Right ventricle myocardium inferior (tissue), 1 donor: ENCODE measurements at regions of chr11 and their contacts with region 1.

Region 1: DNA sequence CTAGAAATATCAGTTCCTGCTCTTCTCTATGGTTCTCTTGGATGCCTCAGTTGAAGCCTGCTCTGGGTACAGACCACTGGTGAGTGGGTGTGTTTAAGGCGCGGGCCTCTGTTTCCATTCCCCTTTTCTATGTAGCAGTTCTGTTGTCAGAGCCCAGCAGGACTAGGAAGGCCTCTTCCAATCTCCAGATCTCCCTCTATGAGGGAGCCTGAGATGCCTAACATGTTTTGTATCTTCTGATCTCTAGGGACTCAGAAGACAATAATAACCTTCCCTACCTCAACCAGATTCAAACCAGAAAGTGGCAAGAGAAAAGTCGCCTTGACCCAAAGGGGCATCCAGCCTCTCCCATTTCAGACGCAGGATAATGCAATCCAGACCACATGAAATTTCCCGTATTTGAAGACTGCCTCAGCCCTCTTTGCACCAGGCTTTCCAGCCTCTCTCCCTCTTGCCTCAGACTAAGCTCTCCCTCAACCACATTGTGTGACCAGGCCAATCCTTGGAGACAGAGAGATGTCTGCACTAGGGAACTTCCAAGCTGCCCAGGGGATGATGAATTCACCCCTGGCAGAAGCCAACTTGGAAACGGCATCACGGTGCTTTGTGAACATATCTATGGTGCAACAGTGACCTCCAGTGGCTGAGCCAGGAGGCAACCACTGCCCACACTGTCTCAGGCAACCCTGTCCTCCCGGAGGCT is 150.1 kb upstream of the UBASH3B start:
- DNase-seq: peak; percentile 78
- ATAC-seq: peak; percentile 97

Region 2: GRCh38 chr11:122020902-122021301 is 484.6 kb before region 1 on chr11:
- intact Hi-C with region 1: loop called (anchors 10 kb)
- DNase-seq: no peak
- ATAC-seq: no peak

Region 3: DNA sequence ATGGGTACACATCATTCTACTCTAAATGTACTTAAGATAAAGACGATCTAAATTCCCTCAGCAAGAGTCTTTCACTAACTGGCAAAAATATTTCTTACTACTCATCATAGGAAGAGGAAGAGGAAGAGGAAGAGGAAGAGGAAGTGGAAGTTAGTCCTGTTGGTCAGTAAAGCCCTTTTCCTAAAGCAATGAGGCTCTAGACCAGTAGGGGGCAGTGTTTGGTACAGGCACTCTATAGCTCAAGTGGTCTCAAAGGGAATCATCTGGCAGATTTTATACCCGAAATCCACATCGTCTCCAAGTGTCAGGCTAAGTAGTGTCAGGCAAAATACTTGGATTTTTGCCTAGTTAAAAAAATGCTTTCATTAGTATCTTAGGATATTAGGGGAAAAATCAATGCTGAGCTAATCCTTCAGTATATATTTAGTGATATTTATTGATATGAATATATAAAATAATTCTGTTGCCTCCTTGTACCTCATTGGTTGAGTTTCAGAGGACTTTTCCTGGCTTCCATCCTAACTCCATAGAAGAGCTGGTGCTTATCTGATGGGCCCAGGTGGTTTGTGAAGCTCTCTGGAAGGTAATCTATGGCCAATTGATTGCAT is 397.2 kb before region 1 on chr11:
- intact Hi-C with region 1: loop called (anchors 10 kb)
- DNase-seq: no peak
- ATAC-seq: no peak

Region 4: GRCh38 chr11:122215244-122215992 is 290.0 kb before region 1 on chr11:
- intact Hi-C with region 1: loop called (anchors 1 kb)
- DNase-seq: peak; percentile 87
- ATAC-seq: peak; percentile 98

Region 5: DNA sequence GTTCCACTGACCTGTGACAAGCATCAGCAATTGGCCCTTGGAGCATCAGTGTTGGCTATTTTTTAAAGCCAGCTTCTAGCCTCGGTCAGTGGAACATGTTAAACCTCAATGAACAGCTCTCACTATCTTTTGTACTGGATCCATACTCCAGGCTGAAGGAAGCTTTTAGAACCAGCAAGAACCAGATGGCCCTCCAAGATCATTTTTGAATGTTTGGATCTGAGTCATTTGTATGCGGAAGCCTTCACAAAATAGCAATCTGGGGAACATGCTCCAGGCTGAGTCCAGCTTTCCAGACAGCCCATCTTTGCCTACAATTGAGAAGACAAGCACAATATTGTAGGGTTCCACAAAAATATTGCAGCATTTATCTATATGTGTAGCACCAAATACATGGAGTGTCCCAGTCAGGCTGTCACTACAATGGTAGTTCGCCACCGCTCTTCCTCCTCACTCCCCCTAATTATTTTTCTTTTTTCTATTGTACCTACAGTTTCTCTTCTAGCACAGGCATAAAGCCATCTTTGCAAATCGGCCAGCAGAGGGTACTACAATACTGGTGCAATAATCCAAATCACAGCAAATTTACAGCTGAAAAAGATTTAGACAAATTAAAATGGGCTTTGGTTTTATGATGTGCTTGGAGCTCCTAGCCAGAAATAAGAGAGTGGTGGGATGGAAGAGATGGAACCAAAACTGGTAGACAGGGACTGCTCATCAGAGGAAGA is 212.0 kb before region 1 on chr11:
- intact Hi-C with region 1: loop called (anchors 1 kb)
- DNase-seq: no peak
- ATAC-seq: peak; percentile 56